PC-9 (cell line): ENCODE measurements at regions of chr10 and their contacts with region 1.

Region 1: DNA sequence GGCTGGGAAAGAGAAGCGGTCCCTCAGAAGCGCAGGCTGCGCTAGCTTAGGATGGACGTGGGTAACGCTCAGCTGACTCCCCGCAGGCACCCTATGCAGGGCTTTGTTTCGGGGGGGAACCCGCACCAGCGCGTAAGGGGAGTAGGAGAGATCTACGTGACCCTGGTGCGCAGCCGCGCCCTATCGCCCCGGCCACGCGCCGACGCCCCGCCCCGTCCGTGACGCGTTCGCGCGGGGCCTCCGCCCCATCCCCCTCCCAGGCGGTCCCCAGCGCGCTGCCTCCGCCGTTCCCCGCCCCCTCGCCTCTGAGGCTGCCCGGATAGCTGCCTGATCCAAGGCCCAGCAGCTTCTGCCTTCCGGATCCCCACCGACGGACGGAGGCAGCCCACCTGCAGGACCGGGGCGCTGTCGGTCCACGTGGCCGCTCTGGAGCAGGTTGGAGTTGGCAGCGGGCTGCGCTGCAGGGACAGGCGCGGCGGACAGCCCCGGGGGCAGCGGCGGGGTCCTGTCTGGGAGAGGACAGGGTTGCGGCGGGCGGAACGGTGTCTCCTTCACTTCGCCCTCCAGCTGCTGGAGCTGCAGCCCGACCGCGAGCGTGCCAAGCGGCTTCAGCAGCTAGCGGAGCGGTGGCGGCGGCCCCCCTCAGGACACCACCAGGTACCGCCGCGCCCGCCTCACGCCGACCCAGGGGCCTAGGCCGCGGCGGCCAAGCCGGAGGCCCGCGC is at the start of gene VDAC2:
- DNase-seq: peak; percentile 62 to 94
- H3K4me3 ChIP-seq: peak within 1 kb of the TSS; percentile 77
- H3K27ac ChIP-seq: peak within 1 kb of the TSS; percentile 86
- H3K4me1 ChIP-seq: peaks cover 33% of the 10 kb centered on the region
- H3K27me3 ChIP-seq: no peaks in the 10 kb centered on the region
- CTCF ChIP-seq: no peak
- total RNA-seq, gene VDAC2: 241 and 243 TPM in 2 replicates

Region 2: DNA sequence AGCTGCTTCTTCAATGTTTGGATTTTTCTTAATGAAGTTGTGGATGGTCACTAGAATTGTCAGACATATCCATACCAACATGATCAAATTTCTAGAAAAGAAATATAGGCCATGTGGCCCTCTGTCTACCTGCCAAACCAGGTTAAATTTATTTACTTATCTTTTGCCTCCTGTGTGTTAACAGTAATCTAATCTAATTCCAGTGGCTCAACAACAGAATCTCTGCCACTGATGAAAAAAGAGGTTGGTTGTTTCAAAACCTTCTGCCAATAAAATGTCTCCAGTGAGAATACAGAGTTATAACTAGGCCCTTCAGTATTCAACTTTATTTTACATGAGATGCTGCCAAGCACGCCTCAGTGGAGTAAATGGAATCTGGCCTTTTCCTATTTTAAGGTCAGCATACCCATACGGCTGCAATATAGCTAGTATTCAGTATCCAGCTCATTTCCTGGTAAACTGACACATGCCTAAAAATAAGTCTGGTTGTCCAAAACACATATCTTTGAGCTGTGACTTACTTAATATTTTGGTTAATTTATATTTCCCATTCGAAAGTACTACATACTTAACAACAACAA is 1076.1 kb before region 1 on chr10:
- CTCF ChIA-PET with region 1: no interaction called
- POLR2A ChIA-PET with region 1: interaction called, 19 read pairs
- intact Hi-C with region 1: no loop called
- DNase-seq: no peak
- H3K4me3 ChIP-seq: no peak overlapping the region
- H3K27ac ChIP-seq: no peak overlapping the region
- H3K4me1 ChIP-seq: no peaks in the 10 kb centered on the region
- H3K27me3 ChIP-seq: no peaks in the 10 kb centered on the region
- CTCF ChIP-seq: no peak

Region 3: GRCh38 chr10:75108684-75109458 is 101.6 kb before region 1 on chr10:
- CTCF ChIA-PET with region 1: no interaction called
- POLR2A ChIA-PET with region 1: no interaction called
- intact Hi-C with region 1: no loop called
- DNase-seq: peak in 1 of 2 experiments; percentile 48
- H3K4me3 ChIP-seq: no peak overlapping the region
- H3K27ac ChIP-seq: no peak overlapping the region
- H3K4me1 ChIP-seq: peaks cover 29% of the 10 kb centered on the region
- H3K27me3 ChIP-seq: no peaks in the 10 kb centered on the region
- CTCF ChIP-seq: peak; percentile 74

Region 4: DNA sequence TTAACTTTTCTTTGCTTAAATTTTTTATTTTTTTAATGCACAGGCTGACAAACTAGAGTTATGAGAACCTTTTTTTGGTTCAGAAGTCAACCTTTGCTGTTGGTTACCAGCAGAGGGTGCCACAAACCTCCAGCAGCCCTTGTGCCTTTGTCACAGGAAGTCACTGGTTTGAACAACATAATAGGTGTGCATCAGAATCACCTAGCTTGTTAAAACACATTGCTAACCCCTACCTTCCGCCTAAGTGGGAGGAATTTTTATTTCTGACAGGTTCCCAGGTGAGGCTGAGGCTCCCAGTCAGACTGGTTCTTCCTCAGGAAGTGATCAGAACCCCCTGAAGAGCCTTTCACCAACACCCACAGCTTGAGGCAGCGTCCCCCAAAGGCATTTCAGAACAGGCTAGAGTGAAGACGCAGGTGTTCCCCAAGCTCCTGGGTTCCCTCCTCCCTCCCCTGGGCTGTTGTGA is 22.4 kb before region 1 on chr10:
- CTCF ChIA-PET with region 1: interaction called, 23 read pairs
- POLR2A ChIA-PET with region 1: interaction called, 5 read pairs
- intact Hi-C with region 1: loop called (anchors 1 kb)
- DNase-seq: peak; percentile 73 to 96
- H3K4me3 ChIP-seq: no peak overlapping the region; the same call in 1 of the 2 replicates
- H3K27ac ChIP-seq: peak overlapping the region; percentile 49
- H3K4me1 ChIP-seq: peaks cover 57% of the 10 kb centered on the region
- H3K27me3 ChIP-seq: no peaks in the 10 kb centered on the region
- CTCF ChIP-seq: peak; percentile 84

Region 5: DNA sequence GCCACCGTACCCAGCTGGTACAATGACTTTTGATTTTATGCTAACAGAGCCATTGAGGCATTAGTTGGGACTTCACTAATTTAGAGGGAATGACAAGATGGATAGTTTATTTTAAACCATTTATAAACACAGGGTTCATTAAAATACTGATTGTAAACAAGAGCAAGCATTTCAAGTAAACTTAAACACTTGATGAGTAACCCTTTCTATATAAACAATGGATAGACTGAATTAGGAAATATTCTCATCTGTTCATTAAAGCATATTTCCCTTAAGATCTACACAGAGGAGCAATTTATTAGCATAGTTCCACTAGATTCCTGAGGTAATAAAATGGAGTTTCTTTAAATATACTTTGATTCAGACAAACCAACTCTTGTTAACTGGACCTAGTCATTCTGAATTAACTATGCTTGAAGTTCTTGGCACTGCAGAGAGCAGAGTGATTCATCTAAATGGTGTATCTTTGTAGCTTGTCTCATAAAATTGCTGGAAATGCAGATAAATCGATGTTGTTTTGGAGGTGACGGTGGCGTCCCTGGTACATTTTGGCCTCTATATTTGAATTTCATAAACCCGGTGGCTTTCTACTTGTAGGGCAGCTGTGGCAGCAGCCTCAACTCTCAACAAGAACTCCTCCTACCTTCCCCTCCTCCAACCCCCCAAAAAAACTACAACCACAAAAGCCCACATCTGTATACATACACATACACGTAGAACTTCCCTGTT is 15.2 kb before region 1 on chr10:
- CTCF ChIA-PET with region 1: no interaction called
- POLR2A ChIA-PET with region 1: interaction called, 29 read pairs
- intact Hi-C with region 1: no loop called
- DNase-seq: peak in 1 of 2 experiments; percentile 57
- H3K4me3 ChIP-seq: no peak overlapping the region
- H3K27ac ChIP-seq: no peak overlapping the region
- H3K4me1 ChIP-seq: peaks cover 36% of the 10 kb centered on the region
- H3K27me3 ChIP-seq: no peaks in the 10 kb centered on the region
- CTCF ChIP-seq: no peak